Mammary epithelial cell (primary cell): ENCODE measurements at regions of chr7 and their contacts with region 1.

Region 1: GRCh38 chr7:77331938-77332695 is 84.0 kb downstream of the GSAP start:
- DNase-seq: peak; percentile 80
- H3K4me3 ChIP-seq: no peak overlapping the region
- H3K27ac ChIP-seq: no peak overlapping the region
- H3K4me1 ChIP-seq: peaks cover 30% of the 10 kb centered on the region
- H3K27me3 ChIP-seq: no peaks in the 10 kb centered on the region
- CTCF ChIP-seq: peak; percentile 42 to 70

Region 2: GRCh38 chr7:77247206-77247850 is 84.8 kb before region 1 on chr7:
- CTCF ChIA-PET with region 1: interaction called, 10 read pairs
- dilution Hi-C with region 1: no loop called
- in situ Hi-C with region 1: loop called in 1 of 2 experiments (anchors 5 kb)
- intact Hi-C with region 1: loop called (anchors 1 kb)
- DNase-seq: peak; percentile 56
- H3K4me3 ChIP-seq: no peak overlapping the region
- H3K27ac ChIP-seq: no peak overlapping the region
- H3K4me1 ChIP-seq: no peaks in the 10 kb centered on the region
- H3K27me3 ChIP-seq: no peaks in the 10 kb centered on the region
- CTCF ChIP-seq: peak; percentile 82 to 90